ENCODE measurements at regions of chr3 and their contacts with region 1.

Region 1: GRCh38 chr3:167684388-167684993 is 30.7 kb upstream of the WDR49 start:
- DNase-seq: no peak

Region 2: DNA sequence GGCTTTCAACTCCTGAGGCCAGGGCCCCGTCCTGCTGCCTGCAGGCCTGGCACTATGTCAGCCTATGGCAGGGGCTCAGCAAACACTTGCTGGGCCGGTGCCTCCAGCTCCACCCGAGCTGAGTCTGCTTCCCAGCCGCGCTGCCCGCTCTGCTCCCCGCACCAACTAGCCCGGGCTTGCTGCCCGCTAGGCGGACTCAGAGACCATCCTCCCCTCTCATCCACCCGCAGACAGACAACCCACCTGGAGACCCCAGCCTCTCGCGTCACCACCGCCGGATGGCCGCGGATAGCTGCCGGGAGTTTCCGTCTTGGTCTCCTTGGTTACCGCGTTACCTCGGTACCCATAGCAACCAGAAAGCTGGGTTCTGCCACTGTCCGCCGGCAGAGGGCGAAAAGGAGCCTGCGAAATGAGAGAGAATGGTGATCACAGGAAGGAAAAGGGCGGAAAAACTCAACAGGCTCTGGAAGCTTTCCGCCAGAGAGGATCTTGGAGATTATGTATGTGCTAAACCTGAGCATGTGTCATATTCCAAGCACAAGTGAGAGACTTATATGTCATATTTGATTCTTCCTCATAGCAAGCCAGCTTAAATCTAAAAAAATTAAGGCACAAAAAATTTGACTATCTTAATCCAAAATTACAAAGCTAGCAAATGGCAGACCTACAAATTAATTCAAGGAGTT is 304.3 kb before region 1 on chr3 and contains the start of gene ZBBX:
- intact Hi-C with region 1: loop called in 1 of 2 experiments (anchors 10 kb)
- DNase-seq: peak; percentile 94
- total RNA-seq, gene ZBBX: not detected

Region 3: DNA sequence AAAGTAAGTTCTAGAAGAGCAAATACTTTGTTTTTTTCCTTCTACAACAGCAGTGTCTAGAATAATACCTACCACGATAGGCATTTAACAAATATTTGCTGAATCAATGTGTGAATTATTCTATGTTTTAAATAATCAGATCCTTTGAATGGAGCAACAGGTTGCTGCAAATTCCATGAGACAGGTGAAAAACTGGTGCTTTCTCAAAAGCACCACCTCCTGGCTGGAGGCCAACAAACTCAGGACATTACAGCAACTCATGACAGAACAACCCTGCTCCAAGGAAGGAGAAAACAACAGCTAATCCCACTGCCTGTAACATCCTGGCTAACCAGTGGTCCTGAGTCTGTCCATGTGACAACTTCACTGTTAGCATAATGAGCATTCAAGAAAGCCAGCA is 144.6 kb before region 1 on chr3:
- intact Hi-C with region 1: no loop called
- DNase-seq: no peak

Region 4: DNA sequence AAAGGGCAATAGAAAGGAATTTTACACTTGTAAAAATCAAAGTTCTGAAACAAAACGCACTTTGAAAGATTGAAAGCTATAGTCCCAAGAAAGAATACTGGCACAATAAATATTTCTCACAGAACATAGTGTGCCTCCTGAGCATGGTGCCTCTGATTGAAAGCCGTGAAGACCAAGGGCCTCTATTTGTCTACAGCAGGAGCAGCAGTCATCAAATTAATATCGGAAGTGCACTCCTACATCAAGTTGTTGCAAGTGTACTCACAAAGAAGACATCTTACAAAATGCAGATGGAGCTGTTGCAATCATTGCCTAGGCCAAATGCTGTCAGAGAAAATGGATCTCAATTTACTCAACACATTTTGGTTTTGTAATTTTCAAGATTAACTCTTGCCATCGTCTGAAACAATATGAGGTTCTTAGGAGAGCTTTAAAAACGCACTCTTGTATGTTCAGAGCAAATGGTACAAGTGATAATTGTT is 21.5 kb before region 1 on chr3:
- intact Hi-C with region 1: no loop called
- DNase-seq: no peak

Measured in posterior vena cava (tissue), 2 donors.